Pancreas (tissue), 10 donors: ENCODE measurements at regions of chr4 and their contacts with region 1.

Region 1: DNA sequence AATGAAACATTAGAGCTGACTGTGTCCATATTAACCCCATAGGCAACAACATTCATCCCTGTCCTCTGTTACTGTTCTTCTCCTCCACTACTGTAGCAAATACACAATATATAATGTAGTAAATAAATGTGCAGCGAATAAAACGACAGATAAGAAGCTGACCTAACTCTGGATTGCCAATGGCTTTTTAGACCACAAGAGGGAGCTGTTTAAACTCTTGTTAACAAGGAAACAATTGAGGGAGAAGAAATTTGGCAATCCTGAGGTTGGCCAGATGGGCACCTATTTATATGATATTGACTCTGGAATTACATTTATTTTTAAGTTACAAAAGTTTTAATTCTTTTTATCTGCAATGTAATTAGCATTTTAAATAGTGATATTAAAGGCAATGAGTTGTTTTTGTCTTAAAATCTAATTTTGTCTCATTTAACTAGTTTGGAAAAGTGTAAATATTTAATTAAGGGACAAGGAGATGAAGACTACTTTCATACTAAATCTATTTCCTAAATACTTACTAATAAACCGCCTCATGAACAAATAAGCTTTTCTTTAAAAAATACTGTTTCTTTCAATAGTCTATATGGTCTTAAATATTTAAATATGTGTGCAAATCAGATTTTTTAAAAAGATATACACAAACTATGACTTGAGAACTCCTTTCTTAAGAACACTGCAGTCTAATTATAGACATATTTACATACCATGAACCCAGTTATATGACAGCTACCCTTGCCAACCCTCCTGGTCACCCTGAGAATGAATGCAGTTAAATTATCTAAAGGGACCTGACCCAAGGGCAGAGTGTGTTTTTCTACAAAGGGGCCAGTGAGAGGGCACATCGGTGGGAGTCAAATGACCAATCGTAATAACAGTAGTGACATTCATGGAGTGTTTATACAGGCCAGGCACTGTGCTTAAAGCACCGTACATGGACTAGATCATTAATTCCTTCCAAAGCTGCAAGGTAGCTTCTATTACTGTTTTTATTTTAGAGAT is 52.9 kb upstream of the HPF1 start:
- DNase-seq: peak in 3 of 6 donors; percentile 21 to 36 (median 24)
- ATAC-seq: peak; percentile 71 to 88 (median 82)
- H3K4me3 ChIP-seq: no peak overlapping the region
- H3K27ac ChIP-seq: no peak overlapping the region
- H3K4me1 ChIP-seq: no peaks in the 10 kb centered on the region
- H3K27me3 ChIP-seq: no peaks in the 10 kb centered on the region
- CTCF ChIP-seq: peak; percentile 65 to 81 (median 76)

Region 2: GRCh38 chr4:170040031-170040680 is 229.5 kb after region 1 on chr4:
- intact Hi-C with region 1: loop called in 2 of 3 experiments (anchors 5 kb)
- DNase-seq: no peak
- ATAC-seq: no peak
- H3K4me3 ChIP-seq: no peak overlapping the region
- H3K27ac ChIP-seq: no peak overlapping the region
- H3K4me1 ChIP-seq: no peaks in the 10 kb centered on the region
- H3K27me3 ChIP-seq: no peaks in the 10 kb centered on the region
- CTCF ChIP-seq: no peak

Region 3: DNA sequence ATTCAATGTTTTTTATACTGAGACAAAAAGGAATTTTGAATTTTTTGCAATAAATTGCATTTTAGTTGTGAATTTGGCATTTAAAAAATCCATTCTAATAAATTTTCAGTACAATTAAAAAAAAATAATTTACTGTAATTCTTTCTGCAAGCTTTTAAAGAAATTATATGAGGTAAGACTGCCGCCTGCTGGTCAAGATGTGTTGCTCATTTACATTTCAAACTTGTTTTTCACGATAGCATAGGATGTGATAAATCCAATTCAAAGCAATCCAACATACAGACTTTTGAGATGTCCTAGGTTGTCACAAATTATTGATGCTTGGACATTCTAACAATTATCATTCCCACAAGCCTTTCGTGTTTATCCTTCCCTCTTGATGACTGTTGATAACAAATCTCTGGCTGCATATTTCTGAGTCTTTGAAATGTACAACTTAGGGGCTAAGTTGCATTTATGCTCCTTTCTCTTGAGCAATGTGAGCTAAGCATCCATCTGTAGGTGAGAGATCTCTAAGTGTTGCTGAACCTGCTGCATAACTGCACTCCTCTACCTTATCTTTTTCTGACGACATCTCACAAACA is 237.2 kb after region 1 on chr4:
- intact Hi-C with region 1: loop called (anchors 5 to 10 kb)
- DNase-seq: peak in 3 of 6 donors; percentile 16 to 57 (median 57)
- ATAC-seq: peak in 2 of 4 donors; percentile 46 to 62
- H3K4me3 ChIP-seq: no peak overlapping the region
- H3K27ac ChIP-seq: no peak overlapping the region
- H3K4me1 ChIP-seq: no peaks in the 10 kb centered on the region
- H3K27me3 ChIP-seq: no peaks in the 10 kb centered on the region
- CTCF ChIP-seq: peak; percentile 25 to 83 (median 64)